Mammary epithelial cell (primary cell): ENCODE measurements at regions of chr9 and their contacts with region 1.

Region 1: GRCh38 chr9:131608493-131609037 is 63.2 kb downstream of the PRRT1B start:
- DNase-seq: peak; percentile 81
- H3K4me3 ChIP-seq: peak overlapping the region in 1 of 3 experiments; percentile 11
- H3K27ac ChIP-seq: peak overlapping the region; percentile 59
- H3K4me1 ChIP-seq: peaks cover 36% of the 10 kb centered on the region
- H3K27me3 ChIP-seq: no peaks in the 10 kb centered on the region
- CTCF ChIP-seq: no peak

Region 2: DNA sequence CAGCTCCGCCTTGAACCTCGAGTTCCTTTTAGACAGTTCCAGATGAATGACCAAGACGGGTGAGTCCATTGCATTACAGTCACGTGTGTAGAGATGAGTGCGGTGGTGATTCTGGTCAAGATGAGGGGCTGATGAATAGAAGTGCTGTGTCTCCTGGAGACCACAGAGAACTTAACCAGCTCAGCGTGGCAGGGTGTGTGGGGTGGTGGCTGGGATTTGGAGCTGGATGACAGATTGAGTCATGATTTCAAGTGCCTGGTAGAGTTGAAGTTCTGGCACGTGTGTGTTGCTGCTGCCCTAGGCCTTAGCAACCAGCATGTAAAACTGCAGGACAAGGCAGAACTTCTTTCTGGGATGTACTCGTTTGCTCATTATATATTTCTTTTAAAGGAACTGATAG is 161.4 kb before region 1 on chr9:
- CTCF ChIA-PET with region 1: no interaction called
- dilution Hi-C with region 1: no loop called
- in situ Hi-C with region 1: no loop called
- intact Hi-C with region 1: no loop called
- DNase-seq: peak; percentile 20
- H3K4me3 ChIP-seq: no peak overlapping the region
- H3K27ac ChIP-seq: no peak overlapping the region
- H3K4me1 ChIP-seq: no peaks in the 10 kb centered on the region
- H3K27me3 ChIP-seq: no peaks in the 10 kb centered on the region
- CTCF ChIP-seq: no peak

Region 3: DNA sequence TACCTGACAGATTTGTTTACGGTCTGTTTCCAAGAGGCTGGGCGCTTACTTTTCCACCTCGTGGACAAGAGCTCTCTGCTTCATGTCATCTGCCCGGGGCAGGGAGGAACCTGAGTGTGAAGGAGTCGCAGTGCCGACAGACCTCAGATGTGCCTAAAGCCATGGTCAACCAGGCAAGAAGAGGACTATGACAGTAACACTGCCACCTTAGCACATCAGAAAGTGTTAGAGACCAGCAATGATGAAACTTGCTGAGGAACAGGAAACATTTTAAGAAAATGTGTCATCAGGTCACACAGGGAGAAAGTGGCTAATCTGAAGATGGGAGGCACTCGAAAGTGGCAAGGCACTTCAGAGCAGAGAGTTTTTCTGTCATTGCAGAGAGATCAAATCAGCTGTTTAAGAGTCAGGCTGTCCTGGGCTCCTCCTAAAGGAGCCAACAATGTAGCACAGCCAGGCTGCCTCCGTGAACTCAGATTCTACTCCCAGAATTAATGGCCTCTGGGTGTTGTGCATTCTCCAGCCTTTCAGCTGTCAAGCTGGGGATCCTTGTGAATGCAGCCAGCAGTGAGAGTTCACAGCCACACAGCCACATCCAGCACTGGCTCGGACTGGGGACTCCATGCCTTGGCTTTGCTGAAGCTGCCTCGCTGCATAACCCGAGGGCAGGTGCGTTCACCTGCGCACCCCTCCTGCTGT is 36.7 kb after region 1 on chr9:
- CTCF ChIA-PET with region 1: no interaction called
- dilution Hi-C with region 1: no loop called
- in situ Hi-C with region 1: no loop called
- intact Hi-C with region 1: no loop called
- DNase-seq: no peak
- H3K4me3 ChIP-seq: no peak overlapping the region
- H3K27ac ChIP-seq: no peak overlapping the region
- H3K4me1 ChIP-seq: peaks cover 10% of the 10 kb centered on the region
- H3K27me3 ChIP-seq: no peaks in the 10 kb centered on the region
- CTCF ChIP-seq: no peak

Region 4: GRCh38 chr9:131656356-131657036 is 47.9 kb after region 1 on chr9:
- CTCF ChIA-PET with region 1: no interaction called
- dilution Hi-C with region 1: no loop called
- in situ Hi-C with region 1: no loop called
- intact Hi-C with region 1: loop called (anchors 2 kb)
- DNase-seq: no peak
- H3K4me3 ChIP-seq: no peak overlapping the region
- H3K27ac ChIP-seq: peak overlapping the region; percentile 45
- H3K4me1 ChIP-seq: peaks cover 49% of the 10 kb centered on the region
- H3K27me3 ChIP-seq: no peaks in the 10 kb centered on the region
- CTCF ChIP-seq: no peak

Region 5: DNA sequence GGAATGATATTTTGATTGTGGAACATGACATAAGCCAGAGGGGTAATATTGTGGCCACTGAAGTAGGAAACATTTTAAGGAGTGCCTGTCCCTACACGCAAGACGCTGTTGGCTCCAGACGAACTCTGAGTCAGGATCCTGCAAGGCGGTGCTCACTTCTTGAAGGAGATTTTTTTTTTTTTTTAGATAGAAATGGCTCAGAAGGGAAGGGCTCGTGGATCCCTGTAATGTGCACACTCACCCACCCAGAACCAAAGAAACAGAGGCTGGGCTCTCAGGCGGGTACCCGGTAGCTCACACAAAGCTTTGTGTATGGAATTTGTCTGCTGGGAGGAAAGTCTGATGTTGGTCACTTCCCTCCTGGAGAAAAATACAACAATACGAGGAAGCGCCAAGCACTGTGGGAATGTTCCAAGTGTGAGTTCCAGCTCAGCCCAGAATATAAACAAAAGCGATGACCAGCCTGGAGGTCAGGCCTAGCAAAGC is 105.6 kb after region 1 on chr9:
- CTCF ChIA-PET with region 1: no interaction called
- dilution Hi-C with region 1: no loop called
- in situ Hi-C with region 1: no loop called
- intact Hi-C with region 1: loop called (anchors 1 kb)
- DNase-seq: peak; percentile 93
- H3K4me3 ChIP-seq: peak overlapping the region in 2 of 3 experiments; percentile 4 to 34
- H3K27ac ChIP-seq: peak overlapping the region; percentile 97
- H3K4me1 ChIP-seq: peaks cover 35% of the 10 kb centered on the region
- H3K27me3 ChIP-seq: no peaks in the 10 kb centered on the region
- CTCF ChIP-seq: no peak

Region 6: DNA sequence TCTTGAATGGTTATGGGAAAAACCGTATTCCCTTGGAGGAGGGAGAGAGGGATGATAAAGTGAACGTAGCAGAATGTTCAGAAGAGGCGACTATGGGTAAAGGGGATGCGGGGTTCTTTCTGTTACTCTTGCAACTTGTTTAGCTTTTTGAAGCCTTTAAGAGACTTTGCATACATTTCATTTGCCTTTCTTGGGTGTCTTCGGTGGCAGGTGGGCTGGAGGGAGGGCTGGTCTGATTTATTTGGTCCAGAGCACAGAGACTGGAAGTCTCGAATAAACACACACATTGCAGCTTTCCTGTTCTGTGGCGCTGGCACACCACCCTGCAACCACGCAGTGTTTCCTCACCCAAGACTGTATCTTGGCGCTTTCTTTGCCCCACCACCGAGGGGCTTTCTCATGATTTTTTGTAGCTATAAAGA is 774.9 kb after region 1 on chr9:
- CTCF ChIA-PET with region 1: no interaction called
- dilution Hi-C with region 1: no loop called
- in situ Hi-C with region 1: no loop called
- intact Hi-C with region 1: no loop called
- DNase-seq: no peak
- H3K4me3 ChIP-seq: no peak overlapping the region
- H3K27ac ChIP-seq: no peak overlapping the region
- H3K4me1 ChIP-seq: no peaks in the 10 kb centered on the region
- H3K27me3 ChIP-seq: no peaks in the 10 kb centered on the region
- CTCF ChIP-seq: no peak